AG04450 (cell line): ENCODE measurements at regions of chr9 and their contacts with region 1.

Region 1: DNA sequence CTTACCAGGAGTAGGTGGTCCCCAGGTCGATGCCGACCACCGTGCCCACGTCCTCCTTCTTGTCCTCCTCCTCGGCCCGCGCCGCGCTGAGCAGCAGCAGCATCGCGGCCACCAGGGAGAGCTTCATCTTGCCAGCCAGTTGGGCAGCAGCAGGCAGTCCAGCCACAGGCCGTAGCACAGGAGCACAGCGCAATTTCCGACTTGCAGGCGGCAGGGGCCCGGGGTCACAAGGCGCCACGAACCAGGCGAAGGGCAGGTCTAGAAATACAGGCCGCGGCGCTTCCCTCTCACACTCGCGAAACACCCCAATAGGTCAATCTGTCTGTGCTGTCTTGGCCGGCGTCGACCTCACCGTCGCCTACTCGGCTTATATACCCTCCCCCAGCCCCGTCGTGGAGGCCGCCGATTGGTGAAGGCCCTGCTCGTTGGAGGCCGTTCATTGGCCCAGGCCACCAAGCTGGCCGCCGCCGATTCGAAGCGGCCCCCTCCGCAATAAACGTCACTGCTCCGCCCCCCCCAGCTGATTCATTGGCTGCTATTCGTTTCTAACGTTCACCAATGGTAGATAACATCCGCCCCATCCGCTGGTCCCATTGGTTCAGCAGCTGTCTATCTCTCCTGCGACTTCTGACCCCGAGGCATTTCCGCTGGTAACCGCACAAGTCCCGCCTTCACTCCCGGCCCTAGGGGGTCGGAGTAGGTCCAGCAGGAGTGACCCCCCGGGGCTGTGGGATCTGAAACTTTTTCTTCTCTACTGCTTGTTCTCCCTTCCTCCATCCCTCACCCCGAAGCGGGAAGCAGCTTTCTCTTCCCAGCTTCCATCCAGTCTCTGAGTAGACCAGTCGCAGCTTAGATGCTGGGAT is at the start of gene HSPA5:
- DNase-seq: peak; percentile 99
- H3K4me3 ChIP-seq: peak within 1 kb of the TSS; percentile 100
- H3K27ac ChIP-seq: peak within 1 kb of the TSS; percentile 99
- H3K27me3 ChIP-seq: no peaks in the 10 kb centered on the region
- CTCF ChIP-seq: no peak
- polyA plus RNA-seq, gene HSPA5: 477 and 591 TPM in 2 replicates

Region 2: GRCh38 chr9:124861342-124862229 is 379.6 kb before region 1 on chr9 and contains the starts of genes ARPC5L and RPL35:
- CTCF ChIA-PET with region 1: no interaction called
- POLR2A ChIA-PET with region 1: interaction called, 13 read pairs
- DNase-seq: peak; percentile 72
- H3K4me3 ChIP-seq: peak within 1 kb of the TSS; percentile 95
- H3K27ac ChIP-seq: peak within 1 kb of the TSS; percentile 81
- H3K27me3 ChIP-seq: no peaks in the 10 kb centered on the region
- CTCF ChIP-seq: peak; percentile 19
- polyA plus RNA-seq, gene ARPC5L: 45.8 and 62.0 TPM in 2 replicates
- polyA plus RNA-seq, gene RPL35: 1,392 and 2,283 TPM in 2 replicates

Region 3: DNA sequence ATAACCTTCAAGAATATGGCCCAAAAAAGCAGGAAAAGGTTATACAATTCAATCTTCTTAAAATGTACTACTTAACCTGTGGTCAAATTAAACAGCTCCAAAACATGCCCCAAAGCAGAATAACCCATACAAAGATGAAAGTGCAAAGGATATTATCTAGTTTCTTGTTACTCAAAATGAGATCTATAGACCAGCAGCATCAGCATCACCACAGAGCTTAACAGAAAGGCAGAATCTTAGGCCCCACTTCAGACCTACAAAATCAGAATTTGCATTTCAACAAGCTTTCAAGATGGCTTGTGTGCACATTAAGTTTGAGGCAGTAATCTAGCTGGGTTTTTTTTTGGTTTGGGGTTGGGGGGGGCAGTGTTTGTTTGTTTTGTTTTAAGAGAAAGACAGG is 151.9 kb before region 1 on chr9:
- CTCF ChIA-PET with region 1: no interaction called
- POLR2A ChIA-PET with region 1: no interaction called
- DNase-seq: no peak
- H3K4me3 ChIP-seq: no peak overlapping the region
- H3K27ac ChIP-seq: no peak overlapping the region
- H3K27me3 ChIP-seq: no peaks in the 10 kb centered on the region
- CTCF ChIP-seq: no peak

Region 4: DNA sequence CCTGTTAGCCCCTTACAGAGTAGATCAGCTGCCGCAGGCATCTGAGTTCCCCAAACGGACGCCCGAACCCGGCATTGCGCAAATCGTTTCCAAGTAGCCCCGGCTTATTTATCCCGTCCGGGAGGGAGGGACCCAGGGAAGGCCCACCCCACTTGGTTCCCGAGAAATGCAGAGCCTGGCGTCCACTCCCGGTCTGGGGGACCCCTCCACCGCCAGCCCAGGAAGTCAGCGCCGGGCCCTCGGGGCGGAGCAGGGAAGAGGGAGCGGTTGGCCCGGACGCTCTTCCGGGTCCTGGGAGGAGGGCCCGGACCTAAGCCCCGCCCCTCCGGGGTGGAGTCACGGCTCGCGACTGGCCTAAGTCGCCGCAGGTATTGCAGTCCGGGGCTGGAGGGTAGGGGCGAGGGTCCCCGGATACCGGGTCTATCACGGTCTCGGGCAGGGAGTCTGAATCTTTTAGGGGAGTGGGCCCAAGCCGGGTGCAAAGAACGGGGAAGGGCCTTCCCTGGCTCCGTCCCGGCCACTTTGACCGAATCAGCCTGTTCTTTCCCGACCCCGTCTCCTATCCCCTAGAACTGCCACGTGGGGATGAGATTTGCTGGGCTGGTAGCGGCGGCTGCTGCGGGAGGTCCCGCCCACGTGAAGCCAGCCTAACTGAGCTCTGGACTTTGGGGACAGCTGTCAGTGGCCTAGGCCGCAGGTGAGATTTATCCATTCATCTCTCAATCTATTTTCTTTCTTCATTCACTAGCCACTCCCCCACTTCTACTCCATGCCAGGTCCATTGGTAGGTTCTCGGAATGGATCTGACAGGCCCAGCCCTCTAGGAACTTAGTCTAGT is 40.8 kb before region 1 on chr9 and contains the start of gene RABEPK:
- CTCF ChIA-PET with region 1: no interaction called
- POLR2A ChIA-PET with region 1: interaction called, 20 read pairs
- DNase-seq: peak; percentile 90
- H3K4me3 ChIP-seq: peak within 1 kb of the TSS; percentile 85
- H3K27ac ChIP-seq: peak within 1 kb of the TSS; percentile 90
- H3K27me3 ChIP-seq: no peaks in the 10 kb centered on the region
- CTCF ChIP-seq: no peak
- polyA plus RNA-seq, gene RABEPK: 45.5 and 45.8 TPM in 2 replicates

Region 5: GRCh38 chr9:125261501-125262293 is 20.5 kb after region 1 on chr9 and contains the start of gene GAPVD1:
- CTCF ChIA-PET with region 1: interaction called, 4 read pairs
- POLR2A ChIA-PET with region 1: interaction called, 37 read pairs
- DNase-seq: no peak
- H3K4me3 ChIP-seq: peak within 1 kb of the TSS; percentile 89
- H3K27ac ChIP-seq: no peak within 1 kb of the TSS
- H3K27me3 ChIP-seq: no peaks in the 10 kb centered on the region
- CTCF ChIP-seq: peak; percentile 36
- polyA plus RNA-seq, gene GAPVD1: 22.1 and 25.8 TPM in 2 replicates

Region 6: DNA sequence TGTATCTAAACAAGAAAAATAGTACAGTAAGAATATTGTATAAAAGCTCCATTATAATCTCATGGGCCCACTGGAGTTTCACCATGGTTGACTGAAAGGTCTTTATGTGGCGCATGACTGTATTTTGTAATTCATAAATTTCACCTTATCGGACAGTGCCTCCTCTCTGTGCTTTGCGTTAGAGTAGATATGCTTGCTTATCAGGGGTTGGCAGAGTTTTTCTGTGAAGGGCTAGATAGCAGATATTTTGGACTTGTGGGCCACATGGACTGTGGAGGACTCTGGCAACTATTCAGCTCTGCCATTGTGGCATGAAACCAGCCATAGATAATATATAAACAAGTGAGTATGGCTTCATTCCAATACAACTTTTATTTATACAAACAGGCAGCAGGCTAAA is 43.6 kb after region 1 on chr9:
- CTCF ChIA-PET with region 1: no interaction called
- POLR2A ChIA-PET with region 1: interaction called, 11 read pairs
- DNase-seq: no peak
- H3K4me3 ChIP-seq: no peak overlapping the region
- H3K27ac ChIP-seq: no peak overlapping the region
- H3K27me3 ChIP-seq: no peaks in the 10 kb centered on the region
- CTCF ChIP-seq: no peak

Region 7: DNA sequence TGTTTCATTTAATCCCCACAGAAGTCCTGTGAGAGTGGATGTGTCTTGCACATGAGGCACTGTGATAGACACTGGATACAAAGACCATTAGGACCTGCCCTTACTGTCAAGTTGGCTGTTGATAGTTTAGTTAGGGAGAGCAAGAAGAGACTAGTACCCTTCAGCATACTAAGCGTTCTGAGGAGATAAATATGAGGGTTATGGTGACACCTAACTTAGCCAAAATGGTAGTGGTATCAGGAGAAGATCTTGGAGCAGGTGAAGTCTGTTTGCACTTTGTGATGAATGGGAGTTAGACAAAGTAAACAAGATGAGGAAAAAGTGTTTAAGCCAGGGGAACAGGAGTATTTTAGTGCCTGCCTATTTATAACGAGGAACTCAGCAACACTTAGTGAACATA is 67.5 kb after region 1 on chr9:
- CTCF ChIA-PET with region 1: no interaction called
- POLR2A ChIA-PET with region 1: interaction called, 10 read pairs
- DNase-seq: no peak
- H3K4me3 ChIP-seq: no peak overlapping the region
- H3K27ac ChIP-seq: no peak overlapping the region
- H3K27me3 ChIP-seq: no peaks in the 10 kb centered on the region
- CTCF ChIP-seq: no peak

Region 8: DNA sequence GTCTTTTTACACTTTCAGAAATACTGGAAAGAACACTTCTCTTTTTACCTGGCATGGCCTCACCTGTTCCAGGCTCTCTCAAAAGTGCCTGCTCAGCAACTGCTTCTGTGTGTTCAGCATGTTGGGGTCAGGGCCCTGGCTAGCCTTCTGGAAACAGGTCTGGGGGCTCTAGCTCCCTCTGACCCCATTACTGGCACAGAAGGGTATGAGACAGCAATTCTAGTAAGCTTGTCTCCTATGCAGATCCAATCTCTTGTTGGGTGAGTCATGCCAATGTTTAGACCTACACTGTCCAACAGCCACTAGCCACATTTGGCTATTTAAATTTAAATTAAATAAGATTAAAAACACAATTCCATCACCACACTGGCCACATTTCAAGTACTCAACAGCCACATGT is 385.0 kb after region 1 on chr9:
- CTCF ChIA-PET with region 1: no interaction called
- POLR2A ChIA-PET with region 1: no interaction called
- DNase-seq: peak; percentile 15
- H3K4me3 ChIP-seq: no peak overlapping the region
- H3K27ac ChIP-seq: no peak overlapping the region
- H3K27me3 ChIP-seq: no peaks in the 10 kb centered on the region
- CTCF ChIP-seq: no peak